ENCODE measurements at regions of chr5 and their contacts with region 1.

Region 1: DNA sequence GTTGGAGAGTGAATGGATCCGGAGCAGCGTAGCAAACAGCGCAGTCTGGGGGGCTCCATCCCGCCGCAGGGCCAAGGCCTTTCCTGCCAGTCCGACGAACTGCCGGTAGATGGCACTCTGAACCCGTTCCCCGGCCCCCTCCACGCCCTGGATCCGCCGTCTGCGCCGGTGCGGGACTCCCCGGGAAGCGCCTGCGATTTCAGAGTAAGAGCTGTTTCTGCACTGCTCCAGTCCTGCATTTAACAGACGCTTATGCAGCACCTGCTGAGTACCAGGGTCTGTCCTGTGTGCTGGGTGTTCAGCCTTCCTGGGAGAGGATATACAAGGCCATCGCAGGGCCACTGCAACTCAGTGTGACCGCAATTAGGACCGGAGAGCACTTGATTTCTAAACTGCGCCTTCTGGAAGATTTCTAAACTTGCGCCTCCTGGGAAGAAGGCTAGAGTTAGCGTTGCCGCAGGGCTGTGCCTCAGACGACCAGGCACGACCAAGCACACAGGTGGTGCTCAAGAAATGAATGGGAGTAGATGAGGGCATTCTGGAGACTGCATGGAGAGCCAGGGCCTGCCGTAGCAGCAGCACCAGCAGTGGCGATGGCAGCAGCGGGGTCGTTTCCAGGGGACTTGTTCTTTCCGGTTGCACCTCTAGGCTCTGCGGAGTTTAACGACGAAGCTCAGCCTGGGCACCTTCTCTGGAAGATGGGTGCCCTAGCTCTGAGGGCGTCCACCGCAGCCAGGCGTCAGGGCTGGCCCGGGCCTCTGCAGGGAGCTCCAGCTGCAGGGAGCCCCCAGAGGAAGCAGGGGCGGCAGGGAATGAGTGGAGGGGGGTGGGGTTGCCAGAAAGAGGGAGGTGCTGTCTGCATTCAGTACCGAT is 14.3 kb upstream of the TIFAB start:
- DNase-seq: peak; percentile 88
- H3K4me3 ChIP-seq: peak overlapping the region; percentile 64
- H3K27ac ChIP-seq: no peak overlapping the region
- H3K4me1 ChIP-seq: no peaks in the 10 kb centered on the region
- H3K27me3 ChIP-seq: peaks cover 45% of the 10 kb centered on the region

Region 2: GRCh38 chr5:135551593-135552447 is 85.4 kb after region 1 on chr5:
- in situ Hi-C with region 1: loop called (anchors 5 kb)
- DNase-seq: peak; percentile 82
- H3K4me3 ChIP-seq: no peak overlapping the region
- H3K27ac ChIP-seq: no peak overlapping the region
- H3K4me1 ChIP-seq: no peaks in the 10 kb centered on the region
- H3K27me3 ChIP-seq: peaks cover 19% of the 10 kb centered on the region

Region 3: GRCh38 chr5:135810188-135810943 is 344.0 kb after region 1 on chr5:
- in situ Hi-C with region 1: loop called (anchors 10 kb)
- DNase-seq: no peak
- H3K4me3 ChIP-seq: no peak overlapping the region
- H3K27ac ChIP-seq: no peak overlapping the region
- H3K4me1 ChIP-seq: no peaks in the 10 kb centered on the region
- H3K27me3 ChIP-seq: no peaks in the 10 kb centered on the region; the same call in 1 of the 2 replicates